Activated CD4-positive, alpha-beta memory T cell treated with anti-CD3 and anti-CD28 coated beads for 36 hours (primary cell): ENCODE measurements at regions of chr11 and their contacts with region 1.

Region 1: DNA sequence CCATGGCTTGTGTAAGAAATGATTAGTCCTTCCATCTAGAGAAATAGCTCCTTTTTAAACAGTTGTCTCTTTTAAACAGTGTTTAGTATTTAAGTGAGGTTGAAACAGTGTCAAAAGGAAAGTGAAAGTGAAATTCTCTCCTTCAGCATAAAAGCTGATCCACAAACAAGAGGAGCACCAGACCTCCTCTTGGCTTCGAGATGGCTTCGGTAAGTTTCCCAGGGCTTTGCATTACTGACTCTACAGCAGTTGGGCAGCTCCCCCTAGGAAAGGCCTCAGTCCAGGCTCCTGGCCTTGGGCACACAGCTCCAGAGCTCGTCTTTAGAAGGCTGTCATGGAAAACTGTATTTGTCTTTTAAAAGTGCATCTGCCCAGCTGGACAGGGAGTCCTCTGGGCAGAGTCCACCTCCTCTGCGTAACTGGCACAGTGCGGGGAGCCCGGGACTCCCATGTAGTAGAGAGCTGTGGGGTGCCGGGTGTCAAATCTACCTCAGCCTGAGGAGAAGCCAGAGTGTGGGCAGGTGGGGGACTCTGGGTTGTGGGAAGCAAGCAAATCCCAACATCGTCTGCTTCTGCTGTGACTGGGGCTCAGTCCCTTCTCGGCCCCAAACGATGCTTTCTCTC is at the start of gene PLAAT4:
- DNase-seq: peak; percentile 44
- H3K4me3 Mint-ChIP-seq: peak within 1 kb of the TSS; percentile 81
- H3K27ac Mint-ChIP-seq: peak within 1 kb of the TSS; percentile 84
- H3K4me1 Mint-ChIP-seq: peaks cover 82% of the 10 kb centered on the region
- H3K27me3 Mint-ChIP-seq: no peaks in the 10 kb centered on the region
- total RNA-seq, gene PLAAT4: 35.7 to 36.3 TPM

Region 2: DNA sequence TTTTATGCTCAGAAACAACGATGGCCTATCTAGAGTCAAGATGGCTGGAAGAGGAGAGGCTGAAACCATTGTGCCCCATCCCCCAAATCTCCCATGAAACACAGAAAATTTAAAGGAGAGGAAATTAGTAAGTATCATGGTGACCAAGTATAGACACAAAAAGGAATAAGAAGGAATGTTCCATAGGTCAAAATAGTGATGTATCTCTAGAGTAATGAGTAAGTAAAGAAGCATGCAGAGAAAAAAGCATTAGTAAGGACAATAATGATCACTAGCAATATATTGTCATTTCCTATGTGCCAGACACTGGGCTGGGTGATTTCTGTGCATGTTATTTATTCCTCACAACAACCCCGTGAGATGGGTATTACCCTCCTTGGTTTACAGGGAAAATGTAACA is 390.2 kb before region 1 on chr11:
- CTCF ChIA-PET with region 1: no interaction called
- POLR2A ChIA-PET with region 1: no interaction called
- intact Hi-C with region 1: no loop called
- DNase-seq: no peak
- H3K4me3 Mint-ChIP-seq: no peak overlapping the region
- H3K27ac Mint-ChIP-seq: no peak overlapping the region
- H3K4me1 Mint-ChIP-seq: no peaks in the 10 kb centered on the region
- H3K27me3 Mint-ChIP-seq: peaks cover 5% of the 10 kb centered on the region

Region 3: GRCh38 chr11:63443716-63444115 is 93.1 kb before region 1 on chr11:
- CTCF ChIA-PET with region 1: interaction called, 3 read pairs
- POLR2A ChIA-PET with region 1: interaction called, 4 read pairs
- intact Hi-C with region 1: loop called (anchors 5 kb)
- DNase-seq: peak; percentile 55
- H3K4me3 Mint-ChIP-seq: no peak overlapping the region
- H3K27ac Mint-ChIP-seq: peak overlapping the region; percentile 69
- H3K4me1 Mint-ChIP-seq: peaks cover 44% of the 10 kb centered on the region
- H3K27me3 Mint-ChIP-seq: peaks cover 4% of the 10 kb centered on the region

Region 4: GRCh38 chr11:63553741-63554151 is 17.0 kb after region 1 on chr11:
- CTCF ChIA-PET with region 1: interaction called, 4 read pairs
- POLR2A ChIA-PET with region 1: interaction called, 7 read pairs
- intact Hi-C with region 1: loop called (anchors 1 kb)
- DNase-seq: peak; percentile 74
- H3K4me3 Mint-ChIP-seq: peak overlapping the region; percentile 69
- H3K27ac Mint-ChIP-seq: peak overlapping the region; percentile 95
- H3K4me1 Mint-ChIP-seq: peaks cover 34% of the 10 kb centered on the region
- H3K27me3 Mint-ChIP-seq: no peaks in the 10 kb centered on the region

Region 5: DNA sequence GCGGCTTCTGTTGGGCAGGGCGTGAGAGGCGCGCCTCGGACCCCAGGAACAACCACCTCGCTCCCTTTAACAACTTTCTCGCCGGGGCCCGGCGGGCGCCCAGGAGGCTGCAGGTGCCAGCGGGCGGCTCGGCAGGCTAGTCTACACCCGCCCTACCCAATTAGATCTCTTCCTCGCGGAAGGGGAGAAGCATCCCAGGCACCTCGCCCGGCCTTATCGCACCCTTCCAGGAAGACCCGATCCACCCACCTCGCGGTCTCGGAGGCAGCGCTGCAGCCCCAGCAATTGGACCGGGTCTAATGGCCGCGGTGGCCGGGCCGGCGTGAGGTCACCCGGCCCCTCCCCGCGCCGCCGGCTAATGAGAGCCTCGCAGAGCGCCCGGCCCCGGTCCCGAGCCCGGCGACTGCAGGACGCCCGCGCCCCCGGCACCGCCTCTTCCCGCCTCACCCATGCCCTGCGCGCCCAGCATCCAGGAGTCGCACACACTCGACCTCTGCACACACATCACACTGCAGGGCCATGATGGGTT is 77.4 kb after region 1 on chr11 and contains the start of gene PLAAT3:
- CTCF ChIA-PET with region 1: no interaction called
- POLR2A ChIA-PET with region 1: no interaction called
- intact Hi-C with region 1: loop called (anchors 5 kb)
- DNase-seq: peak; percentile 55
- H3K4me3 Mint-ChIP-seq: peak within 1 kb of the TSS; percentile 74
- H3K27ac Mint-ChIP-seq: no peak within 1 kb of the TSS
- H3K4me1 Mint-ChIP-seq: peaks cover 17% of the 10 kb centered on the region
- H3K27me3 Mint-ChIP-seq: no peaks in the 10 kb centered on the region
- total RNA-seq, gene PLAAT3: 10.3 to 10.4 TPM

Region 6: GRCh38 chr11:63681321-63682049 is 144.7 kb after region 1 on chr11 and contains the start of gene RTN3:
- CTCF ChIA-PET with region 1: no interaction called
- POLR2A ChIA-PET with region 1: interaction called, 6 read pairs
- intact Hi-C with region 1: loop called (anchors 5 kb)
- DNase-seq: peak; percentile 99
- H3K4me3 Mint-ChIP-seq: peak within 1 kb of the TSS; percentile 87
- H3K27ac Mint-ChIP-seq: peak within 1 kb of the TSS; percentile 78
- H3K4me1 Mint-ChIP-seq: peaks cover 23% of the 10 kb centered on the region
- H3K27me3 Mint-ChIP-seq: no peaks in the 10 kb centered on the region
- total RNA-seq, gene RTN3: 54.4 to 58.4 TPM